ENCODE measurements at regions of chr12 and their contacts with region 1.

Region 1: DNA sequence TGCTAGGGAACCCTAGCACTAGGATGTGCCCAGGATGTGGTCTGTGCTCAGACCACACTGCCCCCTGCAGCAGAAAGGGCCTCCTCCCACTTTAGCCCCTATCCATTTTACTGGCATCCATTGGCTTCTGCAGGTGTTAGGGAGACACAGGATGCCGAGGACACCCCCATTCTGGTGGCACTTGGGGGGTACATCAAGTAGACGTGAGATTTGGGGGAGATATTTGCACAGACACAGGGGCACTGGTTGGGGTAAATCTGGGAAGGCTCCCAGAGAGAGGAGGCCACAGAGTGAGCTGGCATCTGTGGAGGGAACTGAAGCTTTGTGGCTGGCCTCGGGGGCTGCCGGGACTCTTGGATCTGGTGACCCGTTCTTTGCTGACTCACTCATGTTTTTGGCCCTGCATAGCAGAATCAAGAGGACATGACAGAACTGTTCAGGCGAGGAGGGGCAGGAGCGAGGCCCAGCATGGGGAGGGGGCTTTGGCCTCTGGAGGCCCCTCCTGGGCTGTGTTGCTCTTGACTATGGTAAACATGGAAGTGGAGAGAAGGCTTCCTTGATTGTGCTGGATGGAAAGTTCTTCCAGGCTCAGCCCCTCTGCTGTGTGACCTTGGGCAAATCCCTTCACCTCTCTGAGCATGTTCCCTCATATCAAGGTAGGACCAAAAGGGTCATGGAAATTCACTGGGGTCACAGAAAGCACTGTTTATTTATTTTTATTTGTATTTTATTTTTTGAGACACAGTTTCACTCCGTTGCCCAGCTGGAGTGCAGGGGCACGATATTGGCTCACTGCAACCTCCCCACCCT is 1.8 kb downstream of the PLBD2 start:
- DNase-seq: no peak
- H3K4me3 ChIP-seq: peak overlapping the region; percentile 68 to 91 (median 76)
- H3K27ac ChIP-seq: peak overlapping the region; percentile 82 to 91 (median 87)
- H3K4me1 ChIP-seq: peaks cover 12 to 34% (median 27%) of the 10 kb centered on the region in 4 donors
- H3K27me3 ChIP-seq: no peaks in the 10 kb centered on the region
- CTCF ChIP-seq: no peak
- EP300 ChIP-seq: no peak
- POLR2A ChIP-seq: no peak

Region 2: GRCh38 chr12:113184900-113185773 is 175.0 kb before region 1 on chr12 and contains the starts of genes DDX54 and RITA1:
- intact Hi-C with region 1: no loop called
- DNase-seq: peak; percentile 97
- H3K4me3 ChIP-seq: peak within 1 kb of the TSS; percentile 67 to 98 (median 92)
- H3K27ac ChIP-seq: peak within 1 kb of the TSS; percentile 91 to 98 (median 95)
- H3K4me1 ChIP-seq: peaks cover 23 to 41% (median 36%) of the 10 kb centered on the region in 4 donors
- H3K27me3 ChIP-seq: no peaks in the 10 kb centered on the region
- CTCF ChIP-seq: no peak
- EP300 ChIP-seq: no peak
- POLR2A ChIP-seq: no peak
- total RNA-seq, gene DDX54: 29.1 to 59.6 (median 52.7) TPM
- total RNA-seq, gene RITA1: 12.3 to 21.4 (median 16.2) TPM

Region 3: DNA sequence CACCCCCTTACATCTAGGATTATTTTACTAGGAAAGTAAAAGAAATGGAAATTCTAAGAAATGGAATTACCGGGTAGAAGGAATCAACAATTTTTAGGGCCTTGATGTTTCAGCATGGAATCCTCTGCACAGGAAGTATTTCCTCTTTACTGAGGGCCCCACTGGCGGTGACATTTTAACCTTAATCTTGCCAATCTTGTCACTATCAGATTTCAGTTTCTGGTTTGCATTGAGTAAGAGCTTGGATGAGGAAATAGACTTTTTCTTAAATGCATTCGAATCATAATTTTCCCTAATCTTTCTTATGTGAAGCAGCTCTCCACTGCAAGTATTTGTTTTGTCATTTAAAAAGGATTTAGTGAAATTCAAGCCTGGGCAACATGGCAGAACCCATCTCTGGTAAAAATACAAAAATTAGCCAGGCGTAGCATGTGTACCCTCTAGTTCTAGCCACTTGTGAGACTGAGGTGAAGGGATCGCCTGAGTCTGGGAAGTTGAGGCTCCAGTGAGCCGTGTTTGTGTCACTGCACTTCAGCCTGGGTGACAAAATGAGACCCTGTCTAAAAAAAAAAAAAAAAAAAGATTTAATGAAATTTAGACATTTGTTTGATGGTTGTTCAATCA is 98.2 kb before region 1 on chr12:
- intact Hi-C with region 1: no loop called
- DNase-seq: no peak
- H3K4me3 ChIP-seq: no peak overlapping the region
- H3K27ac ChIP-seq: peak overlapping the region; percentile 6 to 72 (median 34)
- H3K4me1 ChIP-seq: peaks cover 30 to 54% (median 43%) of the 10 kb centered on the region in 4 donors
- H3K27me3 ChIP-seq: no peaks in the 10 kb centered on the region
- CTCF ChIP-seq: no peak
- EP300 ChIP-seq: no peak
- POLR2A ChIP-seq: no peak

Region 4: DNA sequence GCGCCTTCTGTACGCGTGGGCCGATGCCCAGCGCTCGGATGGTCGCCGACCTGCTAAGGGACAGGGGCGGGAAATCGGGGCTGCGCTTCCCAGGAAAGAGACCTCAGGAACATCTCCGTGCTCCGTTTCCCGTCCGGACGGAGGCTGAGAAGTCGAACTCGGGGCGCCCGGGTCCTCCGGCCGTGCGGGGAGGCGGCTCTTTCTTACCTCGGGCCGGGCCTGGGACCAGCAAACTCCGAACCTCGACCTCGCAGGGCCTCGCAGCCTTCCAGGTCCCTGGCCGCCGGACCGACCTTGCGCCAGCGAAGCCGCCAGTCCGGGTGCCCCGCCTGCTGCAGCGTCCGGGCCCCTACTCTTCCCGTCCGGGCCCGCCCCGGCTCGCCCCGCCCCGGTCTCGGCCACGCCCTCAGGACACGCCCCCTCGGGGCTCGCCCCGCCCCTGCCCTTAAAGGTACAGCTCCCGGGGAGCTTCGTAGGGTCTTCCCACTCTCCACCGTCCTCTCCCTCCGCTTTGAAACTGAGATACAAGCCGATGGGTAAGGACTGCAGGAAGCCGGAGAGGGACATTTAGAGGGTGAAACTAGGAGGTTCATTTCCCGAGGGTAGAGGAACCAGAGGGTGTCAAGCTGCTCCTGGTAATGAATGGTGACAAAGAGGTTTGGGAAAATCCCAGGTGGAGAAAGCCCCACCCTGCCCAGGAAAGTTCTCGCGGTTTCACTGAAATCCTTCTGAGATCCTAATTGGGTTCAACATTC is 25.2 kb before region 1 on chr12 and contains the start of gene SLC8B1:
- intact Hi-C with region 1: loop called (anchors 2 kb)
- DNase-seq: peak; percentile 97
- H3K4me3 ChIP-seq: peak within 1 kb of the TSS; percentile 66 to 89 (median 72)
- H3K27ac ChIP-seq: peak within 1 kb of the TSS; percentile 74 to 84 (median 78)
- H3K4me1 ChIP-seq: peaks cover 14 to 36% (median 29%) of the 10 kb centered on the region in 4 donors
- H3K27me3 ChIP-seq: no peaks in the 10 kb centered on the region
- CTCF ChIP-seq: peak in 1 of 3 experiments; percentile 26
- EP300 ChIP-seq: no peak
- POLR2A ChIP-seq: peak; percentile 84
- total RNA-seq, gene SLC8B1: 19.1 to 22.8 (median 19.8) TPM

Measured in esophagus muscularis mucosa (tissue), 4 donors.